ENCODE measurements at regions of chr10 and their contacts with region 1.

Region 1: DNA sequence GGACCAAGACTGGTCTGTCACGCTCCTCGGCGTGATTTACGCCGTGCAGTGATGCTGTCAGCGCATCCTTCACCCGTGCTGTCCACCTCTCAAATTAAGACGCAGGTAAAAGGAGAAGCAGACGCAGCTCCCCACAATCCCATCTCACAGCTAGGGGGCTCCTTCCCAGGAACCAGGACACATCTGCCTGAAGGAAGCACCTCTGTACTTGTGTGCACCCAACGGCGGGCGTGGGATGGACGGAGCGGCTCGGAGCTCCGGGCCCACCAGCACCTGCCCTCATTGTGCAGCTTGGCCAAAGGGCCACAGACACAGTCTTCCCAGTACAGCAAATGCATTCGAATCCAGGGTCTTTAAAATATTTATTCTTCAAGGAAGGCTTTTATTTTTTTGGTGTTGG is 55.3 kb downstream of the STK32C start:
- DNase-seq: no peak
- ATAC-seq: peak; percentile 37
- H3K4me3 Mint-ChIP-seq: no peak overlapping the region
- H3K27ac Mint-ChIP-seq: no peak overlapping the region
- H3K4me1 Mint-ChIP-seq: peaks cover 7% of the 10 kb centered on the region
- H3K27me3 Mint-ChIP-seq: no peaks in the 10 kb centered on the region
- CTCF ChIP-seq: no peak

Region 2: GRCh38 chr10:132129431-132129830 is 123.0 kb before region 1 on chr10:
- CTCF ChIA-PET with region 1: no interaction called
- POLR2A ChIA-PET with region 1: no interaction called
- DNase-seq: peak; percentile 46
- ATAC-seq: peak; percentile 67
- H3K4me3 Mint-ChIP-seq: no peak overlapping the region
- H3K27ac Mint-ChIP-seq: no peak overlapping the region
- H3K4me1 Mint-ChIP-seq: peaks cover 5% of the 10 kb centered on the region; the same call in 1 of the 2 replicates
- H3K27me3 Mint-ChIP-seq: no peaks in the 10 kb centered on the region
- CTCF ChIP-seq: no peak

Region 3: DNA sequence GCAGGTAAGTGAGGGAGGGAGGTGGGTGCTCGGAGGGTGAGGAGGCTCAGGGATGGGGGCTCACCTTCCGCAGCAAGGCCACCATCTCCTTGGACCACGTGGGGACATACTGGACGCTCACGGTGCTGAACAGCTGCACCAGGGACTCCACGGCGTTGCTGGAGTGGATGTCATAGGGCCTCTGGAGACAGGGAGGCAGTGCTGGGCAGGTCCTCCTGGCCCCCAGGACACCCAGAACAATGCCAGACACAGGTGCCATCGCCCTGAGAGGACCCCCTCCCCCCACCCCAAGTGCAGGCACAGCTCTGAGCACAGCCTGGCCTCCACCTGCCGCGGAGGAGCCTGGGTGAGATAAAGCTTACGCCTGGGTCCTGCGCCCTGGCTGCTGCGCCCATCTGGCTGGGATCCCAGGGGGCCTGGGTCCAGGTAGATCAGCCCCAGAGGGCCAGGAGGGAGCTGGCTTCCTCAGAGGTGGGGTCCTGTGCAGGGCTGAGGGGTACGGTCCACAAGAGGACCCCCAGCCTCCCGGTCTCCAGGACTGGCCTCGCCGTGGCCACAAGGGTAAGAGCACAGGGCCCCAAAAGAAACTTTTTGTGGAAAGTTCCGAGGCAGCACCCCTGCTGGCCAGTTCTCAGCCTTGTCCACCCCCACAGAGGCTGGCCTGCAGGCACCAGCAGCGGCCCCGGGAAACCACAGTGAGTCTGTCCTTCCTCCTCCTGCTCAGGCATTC is 27.9 kb before region 1 on chr10:
- CTCF ChIA-PET with region 1: interaction called, 10 read pairs
- POLR2A ChIA-PET with region 1: no interaction called
- DNase-seq: no peak
- ATAC-seq: no peak
- H3K4me3 Mint-ChIP-seq: no peak overlapping the region
- H3K27ac Mint-ChIP-seq: no peak overlapping the region
- H3K4me1 Mint-ChIP-seq: peaks cover 3% of the 10 kb centered on the region
- H3K27me3 Mint-ChIP-seq: no peaks in the 10 kb centered on the region
- CTCF ChIP-seq: no peak

Region 4: DNA sequence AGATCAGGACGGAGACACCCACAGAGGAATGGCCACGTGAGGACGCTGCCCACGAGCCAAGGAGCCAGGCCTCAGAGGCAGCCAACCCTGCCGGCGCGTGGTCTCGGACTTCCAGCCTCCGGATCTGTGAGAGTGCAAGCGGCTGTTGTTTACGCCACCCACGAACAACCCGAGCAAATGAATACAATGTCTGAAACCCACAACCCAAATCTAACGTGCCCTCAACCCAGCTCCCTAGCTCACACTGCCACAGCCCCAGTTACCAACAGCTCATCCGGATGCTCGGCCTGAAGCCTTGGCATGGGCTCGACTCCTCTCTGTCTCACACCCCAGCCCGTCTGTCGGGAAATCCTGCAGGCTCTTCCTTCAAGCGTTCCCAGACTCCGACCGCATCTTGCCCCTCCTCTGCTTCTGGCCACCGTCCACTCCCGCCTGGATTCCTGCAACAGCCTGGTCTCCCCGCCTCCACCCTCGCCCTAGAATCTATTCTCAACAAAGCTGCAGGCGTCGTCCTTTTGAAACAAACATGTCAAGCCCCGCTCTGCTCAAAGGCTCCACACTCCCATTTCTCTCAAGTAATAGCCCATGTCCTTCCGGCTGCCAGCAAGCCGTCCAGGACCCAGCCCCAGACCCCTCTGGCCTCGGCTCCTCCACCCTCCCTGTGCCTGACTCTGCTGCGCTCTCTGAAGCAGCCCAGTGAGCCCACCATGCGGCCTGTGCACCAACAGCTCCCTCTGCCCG is 20.0 kb after region 1 on chr10:
- CTCF ChIA-PET with region 1: no interaction called
- POLR2A ChIA-PET with region 1: no interaction called
- DNase-seq: no peak
- ATAC-seq: no peak
- H3K4me3 Mint-ChIP-seq: no peak overlapping the region
- H3K27ac Mint-ChIP-seq: peak overlapping the region; percentile 75
- H3K4me1 Mint-ChIP-seq: no peaks in the 10 kb centered on the region
- H3K27me3 Mint-ChIP-seq: no peaks in the 10 kb centered on the region
- CTCF ChIP-seq: no peak

Region 5: GRCh38 chr10:132282667-132283603 is 30.5 kb after region 1 on chr10:
- CTCF ChIA-PET with region 1: no interaction called
- POLR2A ChIA-PET with region 1: no interaction called
- DNase-seq: no peak
- ATAC-seq: no peak; the same call in 1 of the 2 replicates
- H3K4me3 Mint-ChIP-seq: no peak overlapping the region
- H3K27ac Mint-ChIP-seq: peak overlapping the region; percentile 63; the same call in 1 of the 2 replicates
- H3K4me1 Mint-ChIP-seq: peaks cover 3% of the 10 kb centered on the region
- H3K27me3 Mint-ChIP-seq: no peaks in the 10 kb centered on the region
- CTCF ChIP-seq: no peak

Region 6: GRCh38 chr10:132319853-132320669 is 67.7 kb after region 1 on chr10:
- CTCF ChIA-PET with region 1: no interaction called
- POLR2A ChIA-PET with region 1: no interaction called
- DNase-seq: no peak
- ATAC-seq: no peak
- H3K4me3 Mint-ChIP-seq: no peak overlapping the region
- H3K27ac Mint-ChIP-seq: no peak overlapping the region
- H3K4me1 Mint-ChIP-seq: no peaks in the 10 kb centered on the region
- H3K27me3 Mint-ChIP-seq: no peaks in the 10 kb centered on the region; the same call in 1 of the 2 replicates
- CTCF ChIP-seq: no peak